Endothelial cell of umbilical vein (primary cell): ENCODE measurements at regions of chr1 and their contacts with region 1.

Region 1: GRCh38 chr1:35073265-35073811 is 5.8 kb upstream of the ZMYM1 start:
- DNase-seq: no peak
- H3K4me3 ChIP-seq: no peak overlapping the region
- H3K27ac ChIP-seq: no peak overlapping the region
- H3K4me1 ChIP-seq: no peaks in the 10 kb centered on the region
- H3K27me3 ChIP-seq: no peaks in the 10 kb centered on the region
- CTCF ChIP-seq: no peak
- POLR2A ChIP-seq: no peak

Region 2: GRCh38 chr1:34923490-34923889 is 149.8 kb before region 1 on chr1:
- CTCF ChIA-PET with region 1: no interaction called
- POLR2A ChIA-PET with region 1: interaction called, 11 read pairs
- dilution Hi-C with region 1: no loop called
- intact Hi-C with region 1: no loop called
- DNase-seq: no peak
- H3K4me3 ChIP-seq: no peak overlapping the region
- H3K27ac ChIP-seq: no peak overlapping the region
- H3K4me1 ChIP-seq: no peaks in the 10 kb centered on the region
- H3K27me3 ChIP-seq: peaks cover 14 to 21% of the 10 kb centered on the region in 2 experiments
- CTCF ChIP-seq: no peak
- POLR2A ChIP-seq: no peak